Breast epithelium (tissue), 4 donors: ENCODE measurements at regions of chr1 and their contacts with region 1.

Region 1: GRCh38 chr1:5424802-5425703 is 567.2 kb downstream of the NPHP4 start:
- DNase-seq: no peak
- H3K4me3 ChIP-seq: no peak overlapping the region
- H3K27ac ChIP-seq: no peak overlapping the region
- H3K4me1 ChIP-seq: no peaks in the 10 kb centered on the region
- H3K27me3 ChIP-seq: peaks cover 0 to 48% of the 10 kb centered on the region in 2 donors
- CTCF ChIP-seq: no peak
- POLR2A ChIP-seq: no peak

Region 2: DNA sequence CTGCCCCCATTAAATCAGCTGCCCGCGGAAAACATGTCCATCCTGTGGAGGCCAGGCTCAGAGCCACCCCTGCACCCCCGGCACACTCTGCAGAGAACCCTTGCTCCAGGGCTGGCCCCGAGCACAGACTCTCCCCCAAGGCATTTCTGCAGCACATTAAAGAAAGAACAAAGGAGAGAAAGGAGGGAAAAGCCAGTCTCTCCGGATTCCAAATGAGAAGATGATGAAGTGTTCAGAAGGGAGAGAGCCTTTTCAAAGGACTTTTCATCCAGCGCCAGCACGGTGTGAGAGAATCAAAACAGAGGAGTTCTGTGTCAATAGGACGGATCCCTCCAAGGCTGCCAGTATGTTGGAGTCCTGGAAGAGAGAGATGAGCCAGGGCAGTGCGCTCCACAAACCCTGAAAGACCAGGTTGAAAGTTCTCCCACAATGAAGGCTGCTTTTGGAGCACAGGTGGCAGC is 68.8 kb after region 1 on chr1:
- intact Hi-C with region 1: loop called (anchors 2 kb)
- DNase-seq: peak in 1 of 2 donors; percentile 82
- H3K4me3 ChIP-seq: peak overlapping the region in 1 of 3 donors; percentile 7
- H3K27ac ChIP-seq: peak overlapping the region; percentile 72
- H3K4me1 ChIP-seq: peaks cover 0 to 15% of the 10 kb centered on the region in 2 donors
- H3K27me3 ChIP-seq: peaks cover 0 to 16% of the 10 kb centered on the region in 2 donors
- CTCF ChIP-seq: no peak
- POLR2A ChIP-seq: no peak

Region 3: GRCh38 chr1:6148497-6149241 is 723.6 kb after region 1 on chr1:
- intact Hi-C with region 1: no loop called
- DNase-seq: peak in 1 of 2 donors; percentile 19
- H3K4me3 ChIP-seq: peak overlapping the region in 2 of 3 donors; percentile 22 to 29
- H3K27ac ChIP-seq: no peak overlapping the region
- H3K4me1 ChIP-seq: no peaks in the 10 kb centered on the region
- H3K27me3 ChIP-seq: peaks cover 3 to 29% of the 10 kb centered on the region in 2 donors
- CTCF ChIP-seq: no peak
- POLR2A ChIP-seq: no peak